A549 (cell line): ENCODE measurements at regions of chr12 and their contacts with region 1.

Region 1: GRCh38 chr12:59597385-59597781 is 1.6 kb downstream of the SLC16A7 start:
- DNase-seq: peak in 1 of 2 experiments; percentile 17
- ATAC-seq: peak in 1 of 2 experiments; percentile 53; a peak in 1 of 6 replicates
- H3K4me3 ChIP-seq: peak overlapping the region; percentile 60; the same call in 2 of the 3 replicates
- H3K27ac ChIP-seq: no peak overlapping the region
- H3K4me1 ChIP-seq: peaks cover 9% of the 10 kb centered on the region; the same call in 1 of the 3 replicates
- CTCF ChIP-seq: no peak
- EP300 ChIP-seq: no peak
- POLR2A ChIP-seq: no peak
- RAD21 ChIP-seq: no peak

Region 2: GRCh38 chr12:59620326-59620725 is 22.9 kb after region 1 on chr12:
- CTCF ChIA-PET with region 1: no interaction called
- POLR2A ChIA-PET with region 1: no interaction called
- DNase-seq: no peak
- ATAC-seq: no peak
- H3K4me3 ChIP-seq: no peak overlapping the region
- H3K27ac ChIP-seq: no peak overlapping the region
- H3K4me1 ChIP-seq: no peaks in the 10 kb centered on the region
- CTCF ChIP-seq: no peak
- EP300 ChIP-seq: no peak
- POLR2A ChIP-seq: no peak
- RAD21 ChIP-seq: no peak

Region 3: DNA sequence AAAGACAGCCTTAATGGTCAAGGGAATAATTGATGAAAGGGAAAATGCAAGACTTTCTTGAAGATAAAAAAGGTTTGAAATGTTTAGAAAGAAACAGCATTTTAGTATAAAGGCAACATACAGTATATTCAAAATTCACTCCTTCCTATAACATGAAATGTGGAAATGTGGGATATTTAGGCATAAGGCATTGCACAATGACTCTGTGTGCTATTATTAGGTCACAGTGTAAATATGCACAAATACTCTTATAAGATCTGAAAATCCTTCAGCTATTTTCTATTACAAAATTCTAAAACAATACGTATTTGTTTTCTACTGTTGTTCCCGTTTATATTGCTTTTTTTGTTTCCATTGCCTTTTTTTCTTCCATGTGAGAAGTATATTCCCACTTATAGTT is 126.1 kb after region 1 on chr12:
- CTCF ChIA-PET with region 1: no interaction called
- POLR2A ChIA-PET with region 1: no interaction called
- DNase-seq: no peak
- ATAC-seq: no peak
- H3K4me3 ChIP-seq: no peak overlapping the region
- H3K27ac ChIP-seq: no peak overlapping the region
- H3K4me1 ChIP-seq: no peaks in the 10 kb centered on the region
- CTCF ChIP-seq: no peak
- EP300 ChIP-seq: no peak
- POLR2A ChIP-seq: no peak
- RAD21 ChIP-seq: no peak

Region 4: DNA sequence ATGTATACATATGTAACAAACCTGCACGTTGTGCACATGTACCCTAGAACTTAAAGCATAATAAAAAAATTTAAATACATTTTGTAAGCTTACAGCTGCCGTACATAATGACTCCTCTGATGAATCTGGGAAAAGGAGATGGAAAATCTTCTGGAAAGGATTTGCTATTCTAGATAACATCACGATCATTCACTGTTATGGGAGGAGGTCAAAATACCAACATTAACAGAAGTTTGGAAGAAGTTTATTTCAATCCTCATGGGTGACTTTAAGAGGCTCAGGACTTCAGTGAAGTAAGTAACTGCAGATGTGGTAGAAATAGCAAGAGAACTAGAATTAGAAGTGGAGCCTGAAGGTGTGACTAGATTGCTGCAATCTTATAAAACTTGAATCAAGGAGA is 170.6 kb after region 1 on chr12:
- CTCF ChIA-PET with region 1: no interaction called
- POLR2A ChIA-PET with region 1: interaction called, 10 read pairs
- DNase-seq: no peak
- ATAC-seq: no peak
- H3K4me3 ChIP-seq: no peak overlapping the region
- H3K27ac ChIP-seq: no peak overlapping the region
- H3K4me1 ChIP-seq: no peaks in the 10 kb centered on the region
- CTCF ChIP-seq: no peak
- EP300 ChIP-seq: no peak
- POLR2A ChIP-seq: no peak
- RAD21 ChIP-seq: no peak